BJ (cell line): ENCODE measurements at regions of chr17 and their contacts with region 1.

Region 1: DNA sequence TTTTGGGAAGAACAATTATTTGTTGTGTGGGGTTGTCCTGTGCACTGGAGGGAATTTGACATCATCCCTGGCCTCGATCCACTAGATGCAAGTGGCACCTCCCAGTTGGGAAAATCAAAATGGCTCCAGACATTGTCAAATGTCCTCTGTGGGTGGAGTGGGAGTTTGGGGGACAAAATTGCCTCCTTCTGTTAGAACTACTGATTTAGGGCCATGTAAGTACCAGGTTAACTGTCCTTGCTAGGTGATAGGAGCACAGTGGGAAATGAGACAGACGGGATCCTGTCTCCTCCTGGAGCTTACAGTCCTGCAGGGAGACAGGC is 56.8 kb downstream of the ARHGAP23 start:
- DNase-seq: no peak
- H3K4me3 ChIP-seq: no peak overlapping the region
- H3K27me3 ChIP-seq: no peaks in the 10 kb centered on the region
- CTCF ChIP-seq: no peak

Region 2: DNA sequence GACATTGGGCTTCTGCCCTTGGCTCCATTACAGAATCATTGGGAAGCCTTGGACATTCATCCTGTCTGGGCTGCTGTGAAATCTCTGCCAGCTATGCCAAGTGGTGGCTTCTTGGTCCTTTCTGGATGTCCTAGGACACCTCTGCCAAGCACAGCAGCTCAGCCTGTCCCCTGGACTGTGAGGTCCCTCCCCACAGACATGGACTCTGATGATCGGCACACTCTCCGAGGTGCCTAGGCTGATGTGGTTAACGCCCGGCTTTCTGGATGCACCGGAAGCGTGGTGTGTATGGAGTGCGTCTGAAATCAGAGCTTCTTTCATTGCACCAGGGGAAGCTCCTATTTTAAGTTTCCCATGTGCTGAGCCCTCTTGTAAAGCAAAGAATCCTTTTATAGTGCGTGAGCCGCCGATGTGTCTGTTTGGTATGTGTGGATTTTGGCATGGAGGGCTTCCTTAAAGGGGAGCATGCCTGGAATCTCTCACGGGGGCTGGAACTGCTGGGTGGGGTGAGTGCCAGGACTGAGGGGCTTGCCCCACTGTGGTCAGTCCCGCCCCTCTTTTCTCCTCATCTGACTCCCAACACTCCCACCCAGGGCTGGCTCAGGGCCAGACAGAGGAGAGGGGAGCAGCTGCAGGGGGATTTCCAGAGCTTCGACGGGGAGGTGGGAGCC is 63.8 kb before region 1 on chr17:
- CTCF ChIA-PET with region 1: interaction called, 26 read pairs
- POLR2A ChIA-PET with region 1: no interaction called
- DNase-seq: peak; percentile 65
- H3K4me3 ChIP-seq: no peak overlapping the region
- H3K27me3 ChIP-seq: peaks cover 25% of the 10 kb centered on the region
- CTCF ChIP-seq: no peak

Region 3: DNA sequence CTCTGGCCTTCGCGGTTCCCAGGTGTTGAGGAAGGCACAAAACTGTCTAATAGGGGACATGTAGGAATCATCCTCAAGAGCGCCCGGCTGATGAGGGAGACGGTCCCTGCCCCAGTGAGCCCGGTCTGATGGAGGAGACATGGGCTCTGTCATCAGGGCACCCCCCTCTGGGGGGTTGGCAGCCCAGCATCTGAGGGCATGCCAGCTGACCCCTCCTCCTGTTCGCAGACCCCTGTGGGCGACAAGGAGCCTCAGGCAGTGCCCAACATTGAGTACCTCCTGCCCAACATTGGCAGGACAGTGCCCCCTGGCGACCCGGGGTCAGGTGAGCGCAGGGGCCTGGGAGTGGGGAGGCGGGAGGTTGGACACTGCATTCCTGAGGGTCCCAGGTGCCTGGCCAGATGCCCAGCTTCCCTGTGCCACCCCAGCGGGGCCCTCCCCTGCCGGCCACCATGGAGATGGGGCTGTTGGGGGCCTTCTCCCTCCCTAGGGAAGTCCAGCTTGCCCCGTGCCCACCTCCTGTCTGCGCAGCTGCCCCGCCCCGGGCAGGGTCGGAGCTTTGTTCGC is 13.2 kb after region 1 on chr17:
- CTCF ChIA-PET with region 1: no interaction called
- POLR2A ChIA-PET with region 1: no interaction called
- DNase-seq: no peak
- H3K4me3 ChIP-seq: no peak overlapping the region
- H3K27me3 ChIP-seq: no peaks in the 10 kb centered on the region
- CTCF ChIP-seq: no peak

Region 4: DNA sequence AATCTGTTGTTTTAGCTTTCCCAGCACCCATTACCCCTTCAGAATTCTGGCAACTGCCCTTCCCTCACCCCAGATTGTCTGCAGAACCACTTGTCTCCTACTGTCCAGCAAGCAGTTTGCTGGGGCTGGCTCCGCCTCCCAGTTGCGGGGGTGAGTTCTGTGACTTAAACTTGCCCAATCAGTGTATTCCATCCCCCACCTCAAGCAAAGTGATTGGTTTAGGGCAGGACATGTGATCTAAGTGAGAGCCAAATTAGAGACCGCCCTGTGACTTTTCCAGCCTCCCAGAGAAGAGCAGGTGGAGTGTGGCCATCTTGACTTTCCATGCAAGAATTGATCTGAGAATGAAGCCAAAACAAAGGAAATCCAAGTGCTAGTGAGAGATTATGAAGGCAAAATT is 143.3 kb after region 1 on chr17:
- CTCF ChIA-PET with region 1: no interaction called
- POLR2A ChIA-PET with region 1: no interaction called
- DNase-seq: no peak
- H3K4me3 ChIP-seq: no peak overlapping the region
- H3K27me3 ChIP-seq: no peaks in the 10 kb centered on the region
- CTCF ChIP-seq: no peak

Region 5: GRCh38 chr17:38761612-38762011 is 276.5 kb after region 1 on chr17:
- CTCF ChIA-PET with region 1: no interaction called
- POLR2A ChIA-PET with region 1: no interaction called
- DNase-seq: no peak
- H3K4me3 ChIP-seq: no peak overlapping the region
- H3K27me3 ChIP-seq: no peaks in the 10 kb centered on the region
- CTCF ChIP-seq: peak; percentile 42; the same call in 1 of the 2 replicates